MCF 10A (cell line): ENCODE measurements at regions of chr11 and their contacts with region 1.

Region 1: GRCh38 chr11:90222459-90223247 is at the start of gene CHORDC1:
- DNase-seq: peak; percentile 89
- H3K4me3 Mint-ChIP-seq: peak within 1 kb of the TSS; percentile 96
- H3K27ac Mint-ChIP-seq: peak within 1 kb of the TSS; percentile 39
- H3K4me1 Mint-ChIP-seq: peaks cover 31% of the 10 kb centered on the region
- H3K27me3 Mint-ChIP-seq: no peaks in the 10 kb centered on the region
- CTCF ChIP-seq: no peak
- total RNA-seq, gene CHORDC1: 47.7 and 62.0 TPM in 2 replicates

Region 2: DNA sequence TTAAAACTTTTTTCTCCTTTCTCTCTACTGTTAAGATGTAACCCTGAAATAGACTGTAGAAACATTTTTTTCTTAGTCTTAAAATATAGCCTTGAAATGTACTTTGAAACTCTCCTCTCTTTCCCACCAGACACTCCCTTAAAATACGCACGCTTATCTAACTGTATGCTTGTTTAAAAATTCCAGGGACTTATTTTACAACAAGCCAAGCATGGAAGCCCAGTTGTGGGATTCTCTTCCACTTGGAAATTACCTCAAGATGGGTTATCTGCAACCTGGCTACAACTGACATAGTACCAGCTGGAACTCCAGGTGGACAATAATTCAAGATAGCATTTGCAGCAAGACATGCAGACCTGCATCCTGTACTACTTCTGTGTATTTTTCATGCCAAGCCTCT is 12.3 kb after region 1 on chr11:
- CTCF ChIA-PET with region 1: no interaction called
- POLR2A ChIA-PET with region 1: interaction called, 18 read pairs
- intact Hi-C with region 1: no loop called
- DNase-seq: no peak
- H3K4me3 Mint-ChIP-seq: no peak overlapping the region
- H3K27ac Mint-ChIP-seq: no peak overlapping the region
- H3K4me1 Mint-ChIP-seq: no peaks in the 10 kb centered on the region
- H3K27me3 Mint-ChIP-seq: no peaks in the 10 kb centered on the region
- CTCF ChIP-seq: no peak